ENCODE measurements at regions of chr9 and their contacts with region 1.

Region 1: DNA sequence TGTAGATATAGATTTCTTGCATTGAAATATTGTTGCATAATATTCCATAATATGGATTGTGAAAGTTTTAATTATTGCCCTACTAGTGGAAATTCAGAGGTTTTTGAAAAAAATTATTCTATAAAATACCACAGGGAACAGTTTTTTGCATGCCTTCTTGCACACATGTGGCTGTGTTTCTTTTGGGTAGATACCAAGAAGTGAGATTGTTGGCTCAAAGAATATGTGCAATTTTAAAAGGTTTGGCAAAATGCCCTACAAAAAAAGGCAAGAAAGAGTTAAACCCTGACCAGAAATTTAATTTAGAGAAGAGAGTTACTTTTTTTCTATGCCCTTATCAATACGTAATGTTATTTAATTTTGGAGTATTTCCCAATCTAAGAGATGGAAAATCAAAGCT is 270.8 kb upstream of the DAPK1 start:
- DNase-seq: no peak

Region 2: DNA sequence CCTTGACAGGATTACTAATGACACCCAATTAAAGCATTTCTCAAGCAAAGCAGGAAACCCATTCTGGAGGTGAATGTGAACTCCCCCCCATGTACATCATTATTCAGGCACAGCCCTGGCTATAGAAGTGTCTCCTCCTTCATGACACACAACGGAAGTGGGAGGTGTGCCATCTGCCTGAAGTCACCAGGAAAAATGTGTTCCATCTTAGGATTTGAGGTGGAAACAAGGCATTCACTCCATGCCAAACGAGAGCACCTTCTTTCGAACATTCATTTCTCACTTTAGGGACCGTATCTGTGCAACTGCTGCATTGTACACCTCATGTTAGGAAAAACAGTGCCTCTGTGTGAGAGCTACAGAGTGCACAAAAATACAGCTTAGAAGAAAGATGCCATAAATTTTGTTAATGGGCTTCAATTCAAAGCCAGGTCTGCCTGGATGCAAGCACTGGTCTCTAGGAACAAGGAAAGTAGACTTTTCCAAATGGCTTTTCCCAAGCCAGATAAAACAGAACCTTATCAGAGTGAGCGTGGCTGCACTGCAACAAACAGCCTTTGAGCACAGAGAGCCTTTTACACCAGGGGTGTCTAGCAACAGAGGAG is 1146.9 kb before region 1 on chr9:
- intact Hi-C with region 1: no loop called
- DNase-seq: no peak

Region 3: DNA sequence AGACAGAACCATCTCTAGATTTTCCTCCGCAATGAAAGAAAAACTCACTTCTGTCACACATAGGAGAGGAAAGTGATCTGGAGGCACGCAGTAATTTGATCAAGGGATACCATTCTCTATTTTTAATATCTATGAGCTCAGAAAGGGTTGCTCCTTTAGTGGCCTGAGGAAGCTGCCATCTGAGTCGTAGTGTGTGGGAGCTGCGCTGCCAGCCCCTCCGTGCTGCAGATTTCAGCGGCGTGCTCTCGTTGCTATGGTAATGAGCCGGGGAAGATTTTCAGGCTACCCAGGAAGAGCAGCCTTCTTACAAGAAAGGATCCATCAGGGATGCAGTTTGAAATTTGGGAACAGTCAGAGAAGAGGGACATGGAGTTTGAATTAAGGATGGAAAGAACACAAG is 1110.5 kb before region 1 on chr9:
- intact Hi-C with region 1: loop called in 1 of 2 experiments (anchors 5 kb)
- DNase-seq: no peak

Region 4: GRCh38 chr9:87310827-87311523 is 84.1 kb after region 1 on chr9:
- intact Hi-C with region 1: no loop called
- DNase-seq: no peak

Measured in posterior vena cava (tissue), 2 donors.